ENCODE measurements at regions of chr6 and their contacts with region 1.

Region 1: DNA sequence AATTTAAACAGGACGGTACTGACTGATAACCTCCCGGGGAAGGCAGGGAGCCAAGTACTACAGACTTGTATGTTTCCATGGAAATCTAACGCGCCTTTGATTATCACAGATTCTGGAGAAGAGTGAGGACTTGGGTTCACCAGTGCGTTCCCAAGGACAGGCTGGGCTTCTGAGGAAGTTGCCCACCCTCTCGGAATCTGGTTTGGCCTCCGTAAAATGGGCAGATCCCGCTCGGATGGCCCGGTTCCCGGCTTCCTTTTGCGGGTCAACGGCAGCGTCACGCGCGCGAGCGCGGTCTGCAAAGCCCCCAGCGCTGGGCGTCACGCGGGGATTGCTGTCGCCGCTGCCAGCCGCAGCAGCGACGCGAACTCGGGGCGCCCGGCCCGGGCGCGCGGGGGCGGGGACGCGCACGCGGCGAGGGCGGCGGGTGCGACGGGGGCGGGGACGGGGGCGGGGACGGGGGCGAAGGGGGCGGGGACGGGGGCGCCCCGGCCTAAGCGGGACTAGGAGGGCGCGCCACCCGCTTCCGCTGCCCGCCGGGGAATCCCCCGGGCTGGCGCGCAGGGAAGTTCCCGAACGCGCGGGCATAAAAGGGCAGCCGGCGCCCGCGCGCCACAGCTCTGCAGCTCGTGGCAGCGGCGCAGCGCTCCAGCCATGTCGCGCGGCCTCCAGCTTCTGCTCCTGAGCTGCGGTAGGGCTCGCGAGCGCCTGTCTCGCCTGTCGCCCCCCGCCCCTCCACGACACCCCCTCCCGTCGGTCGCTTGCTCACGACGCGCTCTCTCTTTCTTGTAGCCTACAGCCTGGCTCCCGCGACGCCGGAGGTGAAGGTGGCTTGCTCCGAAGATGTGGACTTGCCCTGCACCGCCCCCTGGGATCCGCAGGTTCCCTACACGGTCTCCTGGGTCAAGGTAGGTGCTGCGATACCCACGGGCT is at the start of gene CD83:
- DNase-seq: peak; percentile 65 to 97 (median 82)
- ATAC-seq: peak; percentile 96
- H3K4me3 ChIP-seq: peak within 1 kb of the TSS; percentile 98
- H3K4me3 Mint-ChIP-seq: peak within 1 kb of the TSS; percentile 96
- H3K27ac ChIP-seq: peak within 1 kb of the TSS; percentile 64 to 76
- H3K27ac Mint-ChIP-seq: peak within 1 kb of the TSS; percentile 94
- H3K4me1 ChIP-seq: peaks cover 19% of the 10 kb centered on the region
- H3K4me1 Mint-ChIP-seq: peaks cover 48% of the 10 kb centered on the region
- H3K27me3 ChIP-seq: no peaks in the 10 kb centered on the region
- H3K27me3 Mint-ChIP-seq: no peaks in the 10 kb centered on the region
- CTCF ChIP-seq: no peak
- total RNA-seq, gene CD83: 35.3 to 36.4 TPM

Region 2: DNA sequence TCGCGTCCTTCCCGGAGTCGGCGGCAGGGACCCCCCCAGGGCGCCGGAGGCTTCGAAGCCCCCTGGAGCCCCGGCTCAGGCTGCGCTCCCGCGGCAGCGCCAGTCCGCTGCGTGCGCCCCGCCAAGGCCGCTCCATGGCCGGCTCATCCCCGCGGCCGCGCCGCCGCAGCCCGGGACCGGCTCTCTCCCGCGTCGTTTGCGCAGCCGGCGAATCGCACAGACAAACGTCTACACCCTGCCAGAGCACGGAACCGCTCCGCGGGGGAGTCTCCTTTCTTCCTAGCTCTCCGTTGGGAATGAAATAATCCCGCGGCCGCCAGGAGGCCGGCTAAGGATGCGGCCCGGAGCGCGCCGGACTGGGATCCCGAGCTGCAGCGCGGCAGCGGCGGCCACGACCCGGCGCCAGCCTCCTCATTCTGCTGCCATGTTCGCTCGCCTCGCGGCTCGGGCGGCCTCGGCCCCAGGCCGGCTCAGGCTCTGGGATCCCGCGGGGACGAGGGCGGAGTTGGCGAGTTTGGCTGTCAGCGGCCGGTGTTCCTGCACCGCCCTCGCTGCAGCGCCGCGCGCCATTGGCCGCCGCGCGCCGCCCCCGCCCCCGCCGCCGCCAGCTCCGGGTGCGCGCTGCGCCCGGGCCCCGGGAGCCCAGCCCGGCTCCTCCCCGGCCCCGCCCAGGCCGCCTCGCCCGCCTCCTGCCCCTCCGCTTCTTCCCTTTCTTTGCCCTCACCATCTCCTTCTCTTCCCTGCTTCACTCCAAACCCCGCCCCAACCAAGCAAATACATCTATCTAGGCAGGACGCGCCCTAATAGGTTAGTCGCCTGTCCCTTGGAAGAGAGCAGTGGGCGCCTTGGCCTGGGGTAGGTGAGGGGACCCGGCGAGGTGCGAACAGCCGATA is 630.1 kb before region 1 on chr6 and contains the start of gene GFOD1:
- CTCF ChIA-PET with region 1: no interaction called
- POLR2A ChIA-PET with region 1: no interaction called
- intact Hi-C with region 1: loop called in 1 of 2 experiments (anchors 5 kb)
- DNase-seq: peak; percentile 28 to 86 (median 61)
- ATAC-seq: peak; percentile 76
- H3K4me3 ChIP-seq: peak within 1 kb of the TSS; percentile 67
- H3K4me3 Mint-ChIP-seq: peak within 1 kb of the TSS; percentile 94
- H3K27ac ChIP-seq: no peak within 1 kb of the TSS
- H3K27ac Mint-ChIP-seq: peak within 1 kb of the TSS; percentile 66
- H3K4me1 ChIP-seq: peaks cover 25% of the 10 kb centered on the region
- H3K4me1 Mint-ChIP-seq: peaks cover 29% of the 10 kb centered on the region
- H3K27me3 ChIP-seq: peaks cover 0 to 5% of the 10 kb centered on the region in 2 experiments
- H3K27me3 Mint-ChIP-seq: peaks cover 9% of the 10 kb centered on the region
- CTCF ChIP-seq: no peak
- total RNA-seq, gene GFOD1: 1.3 to 2.0 TPM

Region 3: GRCh38 chr6:14075095-14075503 is 42.3 kb before region 1 on chr6:
- CTCF ChIA-PET with region 1: interaction called, 3 read pairs
- POLR2A ChIA-PET with region 1: interaction called, 14 read pairs
- intact Hi-C with region 1: no loop called
- DNase-seq: peak in 5 of 14 experiments; percentile 6 to 82 (median 79)
- ATAC-seq: peak; percentile 94
- H3K4me3 ChIP-seq: peak overlapping the region; percentile 55
- H3K4me3 Mint-ChIP-seq: peak overlapping the region; percentile 83
- H3K27ac ChIP-seq: peak overlapping the region; percentile 68 to 77
- H3K27ac Mint-ChIP-seq: peak overlapping the region; percentile 85
- H3K4me1 ChIP-seq: peaks cover 12% of the 10 kb centered on the region
- H3K4me1 Mint-ChIP-seq: peaks cover 30% of the 10 kb centered on the region
- H3K27me3 ChIP-seq: no peaks in the 10 kb centered on the region
- H3K27me3 Mint-ChIP-seq: no peaks in the 10 kb centered on the region
- CTCF ChIP-seq: no peak

Region 4: DNA sequence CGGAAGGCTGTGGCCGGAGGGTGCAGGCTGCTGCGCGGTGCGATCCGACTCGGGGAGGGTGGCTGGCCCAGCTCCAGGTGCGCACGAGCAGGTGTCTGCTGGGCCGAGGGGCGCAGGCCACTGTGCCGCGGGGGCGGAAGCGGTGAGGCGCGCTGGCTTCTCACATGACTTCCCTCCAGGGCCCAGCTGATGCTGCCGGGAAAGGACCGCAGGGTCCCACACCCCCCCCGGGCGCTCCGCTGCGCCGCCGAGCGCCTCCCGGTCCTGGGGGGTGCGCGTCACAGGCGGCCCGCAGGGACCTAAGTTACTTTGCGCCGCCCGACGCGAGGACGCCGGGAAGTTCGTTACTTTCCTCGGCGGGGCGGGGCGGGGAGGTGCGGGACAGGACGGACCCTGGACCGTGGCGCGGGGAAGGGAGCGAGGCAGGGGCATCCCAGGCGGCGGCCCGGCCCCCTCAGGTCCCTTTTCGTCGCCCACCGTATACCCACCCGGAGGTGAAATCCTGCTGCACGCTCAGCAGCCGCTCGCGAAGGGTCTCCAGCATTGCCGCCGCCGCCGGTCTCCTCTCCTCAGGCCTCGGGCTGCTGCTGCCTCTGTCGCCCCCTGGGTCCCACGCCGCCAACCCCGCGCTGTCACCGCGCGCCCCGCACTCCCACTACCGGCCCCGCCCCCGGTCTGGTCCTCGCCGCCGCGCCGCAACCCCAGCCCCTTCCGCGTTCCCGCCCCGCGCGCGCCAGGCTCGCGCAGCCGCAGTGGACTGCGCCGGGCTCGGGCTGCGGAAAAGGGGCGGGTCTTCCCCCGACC is 1545.1 kb after region 1 on chr6 and contains the start of gene DTNBP1:
- CTCF ChIA-PET with region 1: no interaction called
- POLR2A ChIA-PET with region 1: no interaction called
- intact Hi-C with region 1: loop called in 1 of 2 experiments (anchors 5 kb)
- DNase-seq: peak; percentile 66 to 91 (median 80)
- ATAC-seq: peak; percentile 78
- H3K4me3 ChIP-seq: peak within 1 kb of the TSS; percentile 70
- H3K4me3 Mint-ChIP-seq: peak within 1 kb of the TSS; percentile 89
- H3K27ac ChIP-seq: peak within 1 kb of the TSS; percentile 45 to 48
- H3K27ac Mint-ChIP-seq: peak within 1 kb of the TSS; percentile 77
- H3K4me1 ChIP-seq: peaks cover 26% of the 10 kb centered on the region
- H3K4me1 Mint-ChIP-seq: peaks cover 41% of the 10 kb centered on the region
- H3K27me3 ChIP-seq: no peaks in the 10 kb centered on the region
- H3K27me3 Mint-ChIP-seq: no peaks in the 10 kb centered on the region
- CTCF ChIP-seq: no peak
- total RNA-seq, gene DTNBP1: 14.5 to 14.7 TPM